Posterior vena cava (tissue), 2 donors: ENCODE measurements at regions of chrX and their contacts with region 1.

Region 1: GRCh38 chrX:3728454-3728853 is 15.0 kb upstream of the PRKX start:
- DNase-seq: no peak

Region 2: GRCh38 chrX:2917767-2918166 is 810.7 kb before region 1 on chrX:
- intact Hi-C with region 1: loop called in 1 of 2 experiments (anchors 5 kb)
- DNase-seq: no peak

Region 3: GRCh38 chrX:3295756-3296155 is 432.7 kb before region 1 on chrX:
- intact Hi-C with region 1: no loop called
- DNase-seq: no peak

Region 4: DNA sequence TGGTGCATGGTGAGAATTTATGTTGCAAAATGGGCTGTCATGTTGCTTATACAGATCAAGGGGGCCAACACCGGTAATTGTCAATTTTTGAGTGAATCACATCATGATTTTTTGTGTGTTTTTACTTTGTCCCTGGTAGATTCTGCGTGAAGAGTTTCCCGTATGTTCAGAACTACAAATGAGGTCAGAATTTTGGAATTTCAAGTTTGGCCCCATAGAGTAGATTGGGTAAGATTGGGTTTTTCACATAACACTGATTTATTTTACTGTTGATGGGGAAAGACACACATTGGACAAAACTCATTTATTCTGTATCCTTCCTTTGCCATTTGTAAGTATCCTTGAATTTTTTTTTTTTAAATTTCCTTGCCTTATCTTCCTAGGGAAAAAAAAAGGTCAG is 223.5 kb before region 1 on chrX:
- intact Hi-C with region 1: no loop called
- DNase-seq: no peak

Region 5: DNA sequence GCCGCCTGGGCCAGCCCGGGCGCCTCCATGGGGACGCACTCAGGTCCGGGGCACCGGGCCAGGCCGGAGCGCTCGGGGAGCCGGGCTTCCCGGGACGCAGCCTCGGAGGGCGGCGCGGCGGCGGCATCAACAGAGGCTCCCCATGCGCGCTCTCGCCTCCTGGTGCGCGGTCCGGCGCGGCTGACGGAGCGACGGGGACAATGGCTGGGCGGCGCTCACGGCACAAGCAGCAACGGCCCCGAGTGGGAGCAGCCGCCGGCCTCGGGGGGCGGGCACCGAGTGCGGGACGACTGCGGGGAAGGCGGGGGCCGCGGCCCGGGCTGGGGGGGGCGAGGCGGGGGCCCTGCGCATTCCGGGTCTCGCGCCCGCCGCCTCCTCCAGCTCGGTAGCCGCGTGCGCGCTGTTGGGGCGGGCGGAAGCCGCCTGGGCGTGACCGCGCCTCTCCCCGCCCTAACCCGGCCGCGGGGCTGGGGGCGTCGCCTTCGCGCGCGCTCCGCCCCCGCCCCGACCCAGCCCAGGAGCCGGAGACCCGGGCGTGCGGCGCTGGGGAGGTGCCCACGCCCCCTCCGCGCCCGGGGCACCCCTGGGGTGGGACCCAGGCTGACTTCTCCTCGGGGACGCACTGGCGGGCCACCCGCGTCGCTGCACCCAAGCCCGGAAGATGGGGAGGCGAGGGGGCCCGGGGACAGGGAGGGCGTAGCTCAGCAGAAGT is 15.1 kb before region 1 on chrX and contains the start of gene PRKX:
- intact Hi-C with region 1: no loop called
- DNase-seq: peak; percentile 86
- total RNA-seq, gene PRKX: 12.4 TPM